ENCODE measurements at regions of chr15 and their contacts with region 1.

Region 1: GRCh38 chr15:86829245-86829644 is 749.6 kb downstream of the AGBL1 start:
- DNase-seq: no peak
- ATAC-seq: no peak
- H3K4me3 ChIP-seq: no peak overlapping the region
- H3K27ac ChIP-seq: no peak overlapping the region
- H3K4me1 ChIP-seq: peaks cover 4 to 11% of the 10 kb centered on the region in 2 donors
- H3K27me3 ChIP-seq: no peaks in the 10 kb centered on the region
- CTCF ChIP-seq: no peak
- POLR2A ChIP-seq: no peak

Region 2: DNA sequence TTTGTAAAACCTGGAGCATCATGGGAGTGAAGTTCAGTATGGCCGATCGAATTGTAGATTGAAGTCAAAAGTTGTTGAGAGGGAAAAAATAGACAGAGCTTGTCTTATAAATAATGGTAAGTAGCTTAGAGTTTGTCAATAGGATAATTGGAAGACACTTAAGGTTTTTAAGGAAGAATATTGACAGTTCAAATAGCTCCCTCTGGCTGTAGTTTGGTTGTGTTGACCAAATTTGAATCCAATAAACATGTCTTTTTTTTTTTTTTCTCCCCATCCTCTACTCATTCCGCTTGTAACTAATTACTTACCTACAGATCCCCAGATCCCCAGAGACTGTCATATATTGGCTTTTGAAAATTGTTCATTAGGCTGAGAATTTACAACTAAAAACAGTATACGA is 72.6 kb before region 1 on chr15:
- in situ Hi-C with region 1: no loop called
- intact Hi-C with region 1: no loop called
- DNase-seq: no peak
- ATAC-seq: no peak
- H3K4me3 ChIP-seq: no peak overlapping the region
- H3K27ac ChIP-seq: no peak overlapping the region
- H3K4me1 ChIP-seq: peaks cover 14 to 28% of the 10 kb centered on the region in 2 donors
- H3K27me3 ChIP-seq: no peaks in the 10 kb centered on the region
- CTCF ChIP-seq: no peak
- POLR2A ChIP-seq: no peak

Region 3: DNA sequence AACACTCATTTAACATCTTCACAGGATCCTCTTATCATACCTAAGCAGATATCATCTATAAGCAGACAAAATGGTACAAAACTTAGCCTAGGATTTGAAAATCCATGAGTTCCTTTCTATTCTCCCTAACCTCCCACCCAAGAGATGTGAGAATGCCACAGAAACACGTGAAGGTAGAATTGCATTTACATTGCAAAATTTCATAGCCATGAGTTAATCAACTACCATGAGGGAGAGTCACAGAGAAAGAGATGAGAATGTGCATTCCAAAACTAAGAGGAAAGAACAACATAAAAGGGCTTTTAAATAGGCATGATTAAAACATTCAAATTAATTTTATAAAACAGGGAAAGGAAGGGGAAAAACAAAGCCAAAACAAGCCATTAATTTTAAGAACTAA is 621.1 kb after region 1 on chr15:
- in situ Hi-C with region 1: no loop called
- intact Hi-C with region 1: loop called (anchors 5 kb)
- DNase-seq: no peak
- ATAC-seq: no peak
- H3K4me3 ChIP-seq: no peak overlapping the region
- H3K27ac ChIP-seq: no peak overlapping the region
- H3K4me1 ChIP-seq: no peaks in the 10 kb centered on the region
- H3K27me3 ChIP-seq: no peaks in the 10 kb centered on the region
- CTCF ChIP-seq: no peak
- POLR2A ChIP-seq: no peak

Measured in gastrocnemius medialis (tissue), 4 donors.